Right ventricle myocardium superior (tissue), 1 donor: ENCODE measurements at regions of chr22 and their contacts with region 1.

Region 1: DNA sequence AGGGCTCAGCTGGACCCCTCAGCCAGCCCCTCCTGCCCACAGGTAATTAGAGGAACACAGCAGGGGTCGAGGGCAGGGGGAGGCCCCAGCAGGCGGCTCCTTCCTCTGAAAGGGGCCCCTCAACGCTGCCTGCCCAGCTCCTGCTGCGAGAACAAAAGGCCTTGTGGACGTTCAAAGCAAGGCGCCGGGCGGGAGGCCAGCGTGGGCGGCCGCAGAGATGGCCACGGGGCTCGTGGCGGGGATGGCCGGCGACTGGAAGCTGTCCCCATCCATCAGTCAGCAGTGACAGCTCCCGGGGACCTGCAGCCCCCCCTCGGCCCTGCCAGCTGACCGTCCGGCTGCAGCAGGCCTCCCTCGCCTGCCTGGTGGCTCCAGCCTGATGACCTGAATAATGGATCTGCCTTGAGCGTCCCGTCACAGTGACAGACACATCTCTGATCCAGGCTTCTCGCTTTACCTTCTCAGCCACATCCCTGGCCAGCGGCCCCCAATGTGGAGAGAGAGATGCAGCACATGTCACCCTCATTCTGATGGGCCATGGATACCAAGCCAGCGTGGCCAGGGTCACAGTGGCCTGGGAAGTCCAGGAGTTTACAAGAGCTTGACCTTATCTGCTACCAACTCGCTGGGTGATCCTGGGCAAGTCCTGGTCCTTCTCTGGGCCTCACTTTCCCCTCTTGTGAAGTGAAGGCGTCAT is 159.3 kb downstream of the MN1 start:
- DNase-seq: no peak
- ATAC-seq: no peak

Region 2: GRCh38 chr22:27780161-27780575 is 137.9 kb after region 1 on chr22:
- intact Hi-C with region 1: loop called (anchors 10 kb)
- DNase-seq: peak; percentile 57
- ATAC-seq: peak; percentile 13